ENCODE measurements at regions of chr1 and their contacts with region 1.

Region 1: GRCh38 chr1:999725-1000356 is at the start of gene HES4:
- DNase-seq: peak; percentile 51
- H3K4me3 ChIP-seq: peak within 1 kb of the TSS; percentile 73
- CTCF ChIP-seq: no peak

Region 2: GRCh38 chr1:975896-976683 is 23.8 kb before region 1 on chr1:
- CTCF ChIA-PET with region 1: interaction called, 101 read pairs
- POLR2A ChIA-PET with region 1: no interaction called
- DNase-seq: no peak
- H3K4me3 ChIP-seq: peak overlapping the region; percentile 29
- CTCF ChIP-seq: peak; percentile 87

Region 3: DNA sequence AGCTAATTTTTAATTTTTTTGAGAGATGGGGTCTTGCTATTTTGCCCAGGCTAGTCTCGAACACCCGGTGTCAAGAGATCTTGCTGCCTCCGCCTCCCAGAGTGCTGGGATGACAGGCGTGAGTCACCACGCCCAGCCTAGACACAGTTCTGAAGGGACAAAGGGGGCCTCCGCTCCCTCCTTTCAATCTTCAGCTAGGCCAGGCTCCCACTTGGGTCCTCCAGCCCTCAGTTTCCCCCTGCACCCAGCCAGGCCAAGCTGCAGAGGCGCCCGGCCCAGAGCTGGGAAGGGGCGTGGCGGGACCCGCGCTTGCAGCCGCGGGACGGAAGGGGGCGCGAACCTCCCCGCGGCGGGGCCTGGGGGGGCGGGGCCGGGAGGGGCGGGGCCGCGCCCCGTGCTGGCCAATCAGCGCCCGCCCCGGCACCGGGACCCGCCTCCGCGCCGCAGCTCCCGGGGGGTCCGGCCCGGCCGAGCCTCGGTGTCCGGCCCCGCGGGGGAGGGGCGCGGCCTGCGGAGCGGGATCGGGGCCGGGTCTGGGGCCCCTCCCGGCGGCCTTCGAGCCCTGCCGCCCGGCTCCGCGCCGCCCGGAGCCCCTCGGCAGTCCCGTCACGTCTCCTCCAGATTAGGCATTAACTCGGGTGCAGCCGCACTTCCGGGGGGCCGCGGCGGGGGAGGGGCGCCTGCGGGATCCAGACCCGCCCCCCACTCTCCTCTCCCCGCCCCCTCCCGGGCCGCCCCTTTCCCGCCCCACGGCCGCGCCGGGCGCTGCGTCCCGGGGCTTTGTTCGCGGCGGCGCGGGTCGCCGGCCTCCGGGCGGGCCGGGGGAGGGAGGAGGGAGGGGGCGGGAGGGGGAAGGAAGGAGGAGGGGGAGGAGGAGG is 19.5 kb after region 1 on chr1:
- CTCF ChIA-PET with region 1: interaction called, 111 read pairs
- POLR2A ChIA-PET with region 1: interaction called, 9 read pairs
- DNase-seq: no peak
- H3K4me3 ChIP-seq: peak overlapping the region; percentile 59
- CTCF ChIP-seq: peak; percentile 74

Region 4: DNA sequence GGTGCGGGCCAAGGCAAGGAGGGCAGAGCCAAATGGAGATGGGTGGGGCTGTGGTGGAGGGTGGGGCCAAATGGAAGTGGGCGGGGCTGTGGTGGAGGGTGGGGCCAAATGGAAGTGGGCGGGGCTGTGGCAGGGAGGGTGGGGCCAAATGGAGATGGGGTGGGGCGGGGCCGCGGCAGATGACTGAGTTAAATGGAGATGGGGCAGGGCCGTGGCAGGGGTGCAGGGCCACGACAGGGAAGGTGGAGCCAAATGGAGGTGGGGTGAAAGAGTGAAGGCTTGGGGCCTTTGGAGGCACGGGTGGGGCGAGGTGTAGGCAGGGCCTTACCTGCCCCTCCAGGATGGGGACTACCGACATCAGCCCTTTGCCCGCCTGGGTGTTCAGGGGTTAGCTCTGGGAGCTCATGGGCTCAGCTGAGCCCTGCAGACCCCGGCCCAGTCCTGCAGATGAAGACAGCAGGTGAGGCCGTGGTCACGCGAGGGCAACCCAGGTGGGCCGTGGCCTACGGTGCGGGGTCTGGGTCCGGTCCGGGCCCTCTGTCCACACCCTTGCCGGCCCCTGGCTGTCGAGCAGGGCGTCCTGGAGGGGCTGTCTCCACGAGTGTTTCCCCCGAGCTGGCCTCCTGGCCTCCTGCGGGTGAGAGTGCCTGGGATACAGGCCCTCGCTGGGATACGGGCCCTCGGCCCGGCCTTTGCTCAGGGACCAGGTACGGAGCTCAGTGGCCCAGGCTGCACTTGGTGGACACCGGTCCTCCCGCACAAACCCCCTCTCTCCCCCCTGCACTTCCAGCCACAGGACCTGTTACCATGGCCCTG is 92.0 kb after region 1 on chr1:
- CTCF ChIA-PET with region 1: no interaction called
- POLR2A ChIA-PET with region 1: no interaction called
- DNase-seq: no peak
- H3K4me3 ChIP-seq: no peak overlapping the region
- CTCF ChIP-seq: no peak